ENCODE measurements at regions of chr13 and their contacts with region 1.

Region 1: DNA sequence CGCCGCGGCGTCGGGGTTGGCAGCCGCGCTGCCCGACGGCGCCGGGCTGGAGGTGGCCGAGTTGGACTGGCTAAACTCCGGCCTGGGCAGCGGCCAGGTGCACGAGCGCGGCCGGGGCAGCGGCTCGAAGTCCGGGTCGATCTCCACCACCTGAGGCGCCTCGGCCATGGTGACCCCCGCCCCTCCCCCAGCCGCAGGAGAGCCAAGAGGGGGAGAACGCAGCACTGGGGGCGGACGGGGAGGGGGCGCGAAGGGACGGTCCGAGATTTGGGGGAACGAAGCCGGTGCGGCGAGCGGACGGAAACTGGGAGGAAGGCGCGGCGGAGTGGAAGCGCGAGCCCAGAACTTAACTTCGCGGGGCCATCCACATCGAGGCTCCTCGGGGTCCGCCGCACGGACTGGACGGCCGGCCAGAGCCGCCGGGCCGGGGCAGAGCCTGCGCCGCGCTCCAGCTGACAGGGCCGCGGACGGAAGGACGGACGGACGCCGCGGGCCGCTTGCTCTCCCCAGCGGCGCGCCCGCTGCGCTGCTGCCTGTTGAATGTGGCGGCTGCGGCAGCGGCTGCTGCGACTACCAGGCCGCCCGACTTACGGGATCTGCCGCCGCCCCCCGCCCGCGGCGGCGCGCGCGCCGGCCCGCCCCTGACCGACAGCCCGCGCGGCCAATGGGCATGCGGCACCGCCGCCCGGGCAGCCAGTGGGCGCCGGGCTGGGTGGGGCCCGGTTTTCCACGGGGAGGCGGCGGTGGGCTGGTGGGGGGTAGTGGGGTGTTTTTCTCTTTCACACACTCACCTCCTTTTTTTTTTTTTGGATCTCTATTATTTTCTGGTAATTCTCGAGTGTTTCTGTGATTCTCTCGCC is at the start of gene FOXO1:
- DNase-seq: peak; percentile 51
- ATAC-seq: peak; percentile 77
- H3K4me3 ChIP-seq: peak within 1 kb of the TSS; percentile 96 to 99 (median 99)
- H3K27ac ChIP-seq: peak within 1 kb of the TSS; percentile 88
- H3K4me1 ChIP-seq: peaks cover 43% of the 10 kb centered on the region
- H3K27me3 ChIP-seq: no peaks in the 10 kb centered on the region; a peak in 1 of 5 replicates
- CTCF ChIP-seq: 0 out of 2 replicates have a peak, but pooled peaks have one; percentile 5
- EP300 ChIP-seq: no peak
- POLR2A ChIP-seq: peak; percentile 82 to 94
- RAD21 ChIP-seq: peak; percentile 52; the same call in 1 of the 2 replicates
- total RNA-seq, gene FOXO1: 8.1 and 13.8 TPM in 2 replicates

Region 2: GRCh38 chr13:40401911-40402776 is 264.1 kb before region 1 on chr13:
- CTCF ChIA-PET with region 1: no interaction called
- POLR2A ChIA-PET with region 1: no interaction called
- in situ Hi-C with region 1: no loop called
- intact Hi-C with region 1: loop called (anchors 5 kb)
- DNase-seq: peak; percentile 88
- ATAC-seq: peak; percentile 88
- H3K4me3 ChIP-seq: peak overlapping the region; percentile 4 to 53 (median 28); a peak in 4 of 6 replicates
- H3K27ac ChIP-seq: peak overlapping the region; percentile 10
- H3K4me1 ChIP-seq: peaks cover 52% of the 10 kb centered on the region
- H3K27me3 ChIP-seq: no peaks in the 10 kb centered on the region
- CTCF ChIP-seq: no peak
- EP300 ChIP-seq: peak in 1 of 2 experiments; percentile 35; a peak in 1 of 4 replicates
- POLR2A ChIP-seq: no peak
- RAD21 ChIP-seq: no peak

Region 3: GRCh38 chr13:40503966-40504591 is 162.2 kb before region 1 on chr13:
- CTCF ChIA-PET with region 1: no interaction called
- POLR2A ChIA-PET with region 1: interaction called, 3 read pairs
- in situ Hi-C with region 1: no loop called
- intact Hi-C with region 1: loop called (anchors 1 kb)
- DNase-seq: peak; percentile 99
- ATAC-seq: peak; percentile 96
- H3K4me3 ChIP-seq: peak overlapping the region in 1 of 3 experiments; percentile 45; a peak in 2 of 6 replicates
- H3K27ac ChIP-seq: peak overlapping the region; percentile 77
- H3K4me1 ChIP-seq: peaks cover 34% of the 10 kb centered on the region
- H3K27me3 ChIP-seq: no peaks in the 10 kb centered on the region
- CTCF ChIP-seq: no peak
- EP300 ChIP-seq: peak; percentile 74 to 79; a peak in 3 of 4 replicates
- POLR2A ChIP-seq: peak in 1 of 2 experiments; percentile 64; a peak in 1 of 4 replicates
- RAD21 ChIP-seq: peak; percentile 31; the same call in 1 of the 2 replicates

Region 4: GRCh38 chr13:40624383-40624782 is 41.9 kb before region 1 on chr13:
- CTCF ChIA-PET with region 1: no interaction called
- POLR2A ChIA-PET with region 1: no interaction called
- in situ Hi-C with region 1: no loop called
- intact Hi-C with region 1: loop called (anchors 5 kb)
- DNase-seq: no peak
- ATAC-seq: no peak
- H3K4me3 ChIP-seq: no peak overlapping the region
- H3K27ac ChIP-seq: no peak overlapping the region
- H3K4me1 ChIP-seq: peaks cover 64% of the 10 kb centered on the region
- H3K27me3 ChIP-seq: no peaks in the 10 kb centered on the region
- CTCF ChIP-seq: no peak
- EP300 ChIP-seq: no peak
- POLR2A ChIP-seq: no peak
- RAD21 ChIP-seq: no peak